ENCODE measurements at regions of chr9 and their contacts with region 1.

Region 1: GRCh38 chr9:116482740-116483139 is 204.4 kb upstream of the TRIM32 start:
- DNase-seq: peak in 1 of 2 experiments; percentile 51
- H3K4me3 ChIP-seq: no peak overlapping the region
- H3K27ac ChIP-seq: no peak overlapping the region
- H3K4me1 ChIP-seq: no peaks in the 10 kb centered on the region
- H3K27me3 ChIP-seq: no peaks in the 10 kb centered on the region
- CTCF ChIP-seq: no peak

Region 2: DNA sequence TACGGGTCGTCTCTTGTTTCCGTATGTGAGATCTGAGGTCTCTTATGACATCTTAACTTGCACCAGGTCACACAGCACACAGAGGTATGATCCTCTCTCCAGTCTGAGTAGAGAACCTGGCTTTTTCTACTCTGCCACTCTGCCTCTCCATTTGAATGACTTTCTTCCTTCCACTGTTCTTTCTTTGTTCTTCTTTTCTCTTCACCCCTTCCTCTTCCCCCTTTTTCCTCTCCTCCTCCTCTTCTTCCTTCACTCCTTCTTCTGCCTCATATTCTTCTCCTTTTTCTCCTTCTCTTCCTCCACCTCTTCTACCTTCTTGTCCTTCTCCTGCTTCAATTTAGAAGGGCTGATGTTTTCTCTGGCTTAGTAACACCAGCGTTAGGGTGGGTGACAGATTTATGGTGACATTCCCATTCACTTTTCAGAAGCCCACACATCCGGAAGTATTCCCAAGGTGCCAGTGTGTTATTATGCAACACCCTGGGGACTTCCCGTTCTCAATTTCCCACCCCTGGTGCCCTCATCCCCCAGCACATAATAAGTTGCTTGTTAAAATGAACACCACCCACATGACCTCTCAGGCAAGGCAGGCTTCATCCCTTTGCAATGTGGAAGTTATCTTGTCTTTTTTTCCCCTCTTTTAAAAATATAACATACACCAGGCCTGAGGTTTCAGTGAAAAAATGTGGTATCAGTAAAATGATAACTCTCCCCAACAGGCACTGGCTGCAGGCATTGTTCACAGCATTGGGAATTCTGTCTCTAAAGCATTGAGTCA is 207.1 kb before region 1 on chr9:
- CTCF ChIA-PET with region 1: no interaction called
- POLR2A ChIA-PET with region 1: interaction called, 10 read pairs
- intact Hi-C with region 1: no loop called
- DNase-seq: no peak
- H3K4me3 ChIP-seq: no peak overlapping the region
- H3K27ac ChIP-seq: no peak overlapping the region
- H3K4me1 ChIP-seq: 0 out of 2 replicates have a peak, but pooled peaks cover 5% of the 10 kb centered on the region
- H3K27me3 ChIP-seq: no peaks in the 10 kb centered on the region
- CTCF ChIP-seq: no peak

Measured in PC-9 (cell line).